ENCODE measurements at regions of chr2 and their contacts with region 1.

Region 1: DNA sequence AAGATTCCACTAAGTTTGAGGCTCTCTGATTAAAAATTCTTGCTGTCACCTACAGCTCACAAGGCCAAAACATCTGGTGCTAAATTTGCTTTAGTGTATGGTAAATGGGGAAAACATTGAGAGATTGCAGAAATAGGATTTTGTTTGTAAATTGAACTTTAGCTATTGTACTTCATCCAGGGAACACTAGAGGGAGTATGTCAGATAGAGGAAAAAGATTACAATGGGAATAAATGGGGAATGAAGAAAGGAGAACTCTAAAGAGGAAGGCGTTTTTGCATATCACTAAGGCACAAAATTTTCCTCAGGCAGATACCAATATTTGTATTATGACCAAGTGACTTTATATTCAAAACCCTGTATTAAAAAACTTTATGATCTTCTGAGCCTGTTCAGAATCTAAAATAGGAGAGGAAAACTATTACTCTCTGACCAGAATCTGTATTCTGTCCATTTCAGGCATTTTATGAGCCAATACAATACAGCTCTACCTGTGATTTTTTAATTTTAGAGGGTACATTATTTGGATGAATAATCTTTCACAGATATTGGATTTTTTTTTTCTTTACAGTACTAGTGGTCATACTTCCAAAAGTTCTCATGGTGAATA is 52.3 kb upstream of the ITGB6 start:
- DNase-seq: peak in 3 of 14 experiments; percentile 25 to 55 (median 42)
- ATAC-seq: no peak
- H3K4me3 ChIP-seq: no peak overlapping the region
- H3K4me3 Mint-ChIP-seq: no peak overlapping the region
- H3K27ac ChIP-seq: no peak overlapping the region
- H3K27ac Mint-ChIP-seq: no peak overlapping the region
- H3K4me1 ChIP-seq: no peaks in the 10 kb centered on the region
- H3K4me1 Mint-ChIP-seq: no peaks in the 10 kb centered on the region
- H3K27me3 ChIP-seq: no peaks in the 10 kb centered on the region
- H3K27me3 Mint-ChIP-seq: no peaks in the 10 kb centered on the region
- CTCF ChIP-seq: peak; percentile 87

Region 2: GRCh38 chr2:160269803-160270570 is 17.6 kb after region 1 on chr2:
- CTCF ChIA-PET with region 1: interaction called, 10 read pairs
- POLR2A ChIA-PET with region 1: interaction called, 3 read pairs
- intact Hi-C with region 1: no loop called
- DNase-seq: peak; percentile 49 to 87 (median 58)
- ATAC-seq: peak; percentile 84
- H3K4me3 ChIP-seq: peak overlapping the region; percentile 62
- H3K4me3 Mint-ChIP-seq: peak overlapping the region; percentile 88
- H3K27ac ChIP-seq: peak overlapping the region; percentile 38 to 77
- H3K27ac Mint-ChIP-seq: peak overlapping the region; percentile 96
- H3K4me1 ChIP-seq: peaks cover 26% of the 10 kb centered on the region
- H3K4me1 Mint-ChIP-seq: peaks cover 42% of the 10 kb centered on the region
- H3K27me3 ChIP-seq: no peaks in the 10 kb centered on the region
- H3K27me3 Mint-ChIP-seq: no peaks in the 10 kb centered on the region
- CTCF ChIP-seq: peak; percentile 49

Region 3: DNA sequence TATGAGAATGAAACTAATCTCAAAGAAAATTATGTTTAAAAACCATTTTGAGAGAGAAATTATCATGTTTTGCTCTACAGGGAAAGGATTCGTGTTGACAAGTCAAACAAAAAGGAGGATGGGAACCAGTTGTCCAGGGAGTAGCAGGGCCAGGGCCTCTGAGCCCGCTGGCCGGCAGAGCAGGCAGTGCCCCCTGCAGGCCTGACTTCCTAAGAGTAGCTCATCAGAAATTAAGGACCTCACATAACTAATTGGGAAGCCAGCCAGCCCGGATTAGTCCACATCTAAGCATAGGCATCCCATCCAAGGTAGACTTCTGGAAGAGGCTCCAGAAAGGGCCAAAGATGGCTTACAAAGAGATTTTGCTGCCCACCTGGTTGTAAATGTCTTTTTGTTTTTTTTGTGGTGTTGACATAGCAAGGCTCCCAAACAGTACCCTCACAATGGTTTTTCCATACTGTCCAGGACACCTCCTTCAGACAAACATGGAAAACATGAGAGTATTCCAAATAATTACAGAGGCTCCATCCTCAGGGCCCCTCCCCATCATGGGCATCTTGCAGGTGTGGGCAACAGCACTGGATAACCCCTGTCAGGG is 666.6 kb after region 1 on chr2:
- CTCF ChIA-PET with region 1: no interaction called
- POLR2A ChIA-PET with region 1: no interaction called
- intact Hi-C with region 1: loop called in 1 of 2 experiments (anchors 5 kb)
- DNase-seq: peak in 13 of 14 experiments; percentile 1 to 60 (median 21)
- ATAC-seq: no peak
- H3K4me3 ChIP-seq: no peak overlapping the region
- H3K4me3 Mint-ChIP-seq: no peak overlapping the region
- H3K27ac ChIP-seq: no peak overlapping the region
- H3K27ac Mint-ChIP-seq: no peak overlapping the region
- H3K4me1 ChIP-seq: no peaks in the 10 kb centered on the region
- H3K4me1 Mint-ChIP-seq: no peaks in the 10 kb centered on the region
- H3K27me3 ChIP-seq: no peaks in the 10 kb centered on the region
- H3K27me3 Mint-ChIP-seq: no peaks in the 10 kb centered on the region
- CTCF ChIP-seq: peak; percentile 37

Region 4: DNA sequence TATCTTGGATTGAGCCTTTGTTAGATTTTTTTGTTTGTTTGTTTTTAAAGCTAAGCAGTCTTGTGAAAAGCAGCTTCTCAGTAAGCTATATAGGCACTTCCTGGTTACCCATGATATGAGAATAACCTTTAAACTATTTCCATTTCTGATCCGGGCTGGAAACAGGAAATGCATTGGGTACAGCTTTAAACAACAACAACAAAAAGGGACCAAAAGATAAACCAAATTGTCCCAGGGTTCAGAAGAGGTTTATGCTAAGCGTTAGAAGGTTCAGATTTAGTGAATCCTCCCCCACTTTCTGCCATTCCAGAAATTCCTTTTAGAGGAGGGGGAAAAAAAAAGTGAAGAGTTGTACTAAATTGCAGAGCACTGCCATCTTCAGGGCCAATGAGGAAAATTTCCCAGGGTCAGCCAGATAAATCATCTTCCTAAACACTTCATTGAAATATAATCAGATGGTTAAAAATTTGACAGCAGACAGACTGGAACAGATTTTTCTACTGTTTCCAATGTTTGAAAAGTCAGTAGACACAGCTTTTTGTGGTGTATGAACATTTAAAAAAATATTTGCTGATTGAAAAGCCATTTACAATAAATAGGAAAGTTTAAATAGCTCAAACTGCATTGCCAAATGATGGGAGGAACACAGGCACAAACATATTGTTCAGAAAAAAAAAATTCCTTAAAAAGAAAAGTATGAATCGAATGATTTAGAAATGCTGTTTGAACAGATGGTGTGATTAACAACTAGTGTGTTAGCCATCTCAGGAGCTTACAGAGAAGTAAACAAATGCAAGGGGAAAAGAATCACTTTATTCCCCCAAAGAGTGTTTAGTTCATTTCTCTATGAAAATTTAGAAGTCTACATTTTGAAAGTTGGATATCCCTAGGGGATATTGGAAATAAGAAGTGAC is 717.9 kb after region 1 on chr2:
- CTCF ChIA-PET with region 1: interaction called, 3 read pairs
- POLR2A ChIA-PET with region 1: no interaction called
- intact Hi-C with region 1: loop called (anchors 1 to 2 kb)
- DNase-seq: peak in 4 of 14 experiments; percentile 22 to 48 (median 38)
- ATAC-seq: peak; percentile 67
- H3K4me3 ChIP-seq: no peak overlapping the region
- H3K4me3 Mint-ChIP-seq: no peak overlapping the region
- H3K27ac ChIP-seq: no peak overlapping the region
- H3K27ac Mint-ChIP-seq: no peak overlapping the region
- H3K4me1 ChIP-seq: no peaks in the 10 kb centered on the region
- H3K4me1 Mint-ChIP-seq: no peaks in the 10 kb centered on the region
- H3K27me3 ChIP-seq: no peaks in the 10 kb centered on the region
- H3K27me3 Mint-ChIP-seq: no peaks in the 10 kb centered on the region
- CTCF ChIP-seq: peak; percentile 57

Region 5: GRCh38 chr2:161063157-161063954 is 811.0 kb after region 1 on chr2:
- CTCF ChIA-PET with region 1: no interaction called
- POLR2A ChIA-PET with region 1: no interaction called
- intact Hi-C with region 1: loop called (anchors 5 to 10 kb)
- DNase-seq: peak; percentile 36 to 81 (median 54)
- ATAC-seq: peak; percentile 94
- H3K4me3 ChIP-seq: no peak overlapping the region
- H3K4me3 Mint-ChIP-seq: no peak overlapping the region
- H3K27ac ChIP-seq: no peak overlapping the region
- H3K27ac Mint-ChIP-seq: no peak overlapping the region
- H3K4me1 ChIP-seq: peaks cover 4% of the 10 kb centered on the region
- H3K4me1 Mint-ChIP-seq: peaks cover 5% of the 10 kb centered on the region
- H3K27me3 ChIP-seq: no peaks in the 10 kb centered on the region
- H3K27me3 Mint-ChIP-seq: no peaks in the 10 kb centered on the region
- CTCF ChIP-seq: peak; percentile 92